ENCODE measurements at regions of chrX and their contacts with region 1.

Region 1: GRCh38 chrX:153927922-153928760 is 2.1 kb upstream of the ARHGAP4 start:
- DNase-seq: peak; percentile 90
- H3K4me3 Mint-ChIP-seq: peak overlapping the region; percentile 86
- H3K27ac Mint-ChIP-seq: peak overlapping the region; percentile 99
- H3K4me1 Mint-ChIP-seq: peaks cover 20% of the 10 kb centered on the region
- H3K27me3 Mint-ChIP-seq: no peaks in the 10 kb centered on the region

Region 2: GRCh38 chrX:153763989-153764755 is 164.0 kb before region 1 on chrX and contains the start of gene PLXNB3:
- intact Hi-C with region 1: loop called (anchors 10 kb)
- DNase-seq: peak; percentile 49
- H3K4me3 Mint-ChIP-seq: no peak within 1 kb of the TSS
- H3K27ac Mint-ChIP-seq: no peak within 1 kb of the TSS
- H3K4me1 Mint-ChIP-seq: peaks cover 4% of the 10 kb centered on the region
- H3K27me3 Mint-ChIP-seq: no peaks in the 10 kb centered on the region
- total RNA-seq, gene PLXNB3: 0.62 and 0.91 TPM in 2 replicates

Region 3: GRCh38 chrX:153947009-153947769 is 19.0 kb after region 1 on chrX:
- intact Hi-C with region 1: loop called (anchors 1 kb)
- DNase-seq: peak; percentile 71
- H3K4me3 Mint-ChIP-seq: no peak overlapping the region
- H3K27ac Mint-ChIP-seq: peak overlapping the region; percentile 82
- H3K4me1 Mint-ChIP-seq: peaks cover 14% of the 10 kb centered on the region
- H3K27me3 Mint-ChIP-seq: no peaks in the 10 kb centered on the region

Region 4: DNA sequence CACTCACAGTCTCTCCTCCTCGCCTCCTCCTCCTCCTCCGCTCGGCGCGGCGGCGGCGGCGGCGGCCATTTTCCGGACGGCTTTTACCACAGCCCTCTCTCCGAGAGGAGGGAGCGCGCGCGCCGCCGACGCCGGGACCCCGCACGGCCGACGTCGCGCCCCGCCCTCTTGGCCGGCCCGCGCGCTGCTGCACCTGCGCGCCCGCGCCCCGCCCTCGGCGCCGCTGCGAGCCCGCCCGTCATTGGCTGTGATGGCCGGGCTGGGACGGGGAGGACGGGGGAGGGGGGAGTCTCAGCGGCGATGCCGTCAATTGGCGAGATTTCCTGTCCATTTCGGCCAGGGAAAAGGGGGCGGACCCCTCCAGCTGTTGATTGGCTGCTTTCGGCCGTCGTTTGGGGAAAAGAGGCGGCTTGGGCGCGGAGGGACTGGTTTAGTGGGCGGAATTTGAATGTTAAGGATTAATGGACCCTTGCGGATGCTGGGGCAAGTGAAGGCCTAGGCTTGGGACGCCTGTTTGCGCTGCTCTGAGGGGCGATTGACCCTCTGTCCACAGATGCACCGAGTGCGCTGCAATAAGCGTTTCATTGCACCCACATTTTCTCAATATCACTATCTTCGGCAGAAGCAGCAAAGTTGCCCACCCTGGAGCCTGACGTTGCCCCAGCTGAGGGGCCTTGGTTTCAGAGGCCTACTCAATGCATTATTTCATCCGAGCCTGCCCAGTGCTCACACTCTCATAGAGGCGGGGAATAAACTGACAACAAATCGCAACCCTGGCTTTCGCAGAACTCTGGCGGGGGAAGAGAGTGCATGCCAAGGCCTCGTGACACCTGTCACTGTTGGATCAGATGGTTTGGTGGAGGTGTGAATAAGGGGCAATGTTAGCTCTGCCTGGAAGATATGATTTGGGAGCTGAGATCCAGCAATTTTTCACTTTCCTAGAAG is 169.7 kb after region 1 on chrX and contains the start of gene MECP2:
- intact Hi-C with region 1: loop called (anchors 5 kb)
- DNase-seq: peak; percentile 85
- H3K4me3 Mint-ChIP-seq: peak within 1 kb of the TSS; percentile 99
- H3K27ac Mint-ChIP-seq: peak within 1 kb of the TSS; percentile 100
- H3K4me1 Mint-ChIP-seq: peaks cover 55% of the 10 kb centered on the region
- H3K27me3 Mint-ChIP-seq: peaks cover 4% of the 10 kb centered on the region
- total RNA-seq, gene MECP2: 58.2 and 58.4 TPM in 2 replicates

Region 5: GRCh38 chrX:154478728-154479622 is 550.8 kb after region 1 on chrX and contains the start of gene LAGE3:
- intact Hi-C with region 1: loop called (anchors 1 kb)
- DNase-seq: peak; percentile 92
- H3K4me3 Mint-ChIP-seq: peak within 1 kb of the TSS; percentile 91
- H3K27ac Mint-ChIP-seq: peak within 1 kb of the TSS; percentile 94
- H3K4me1 Mint-ChIP-seq: peaks cover 14% of the 10 kb centered on the region
- H3K27me3 Mint-ChIP-seq: no peaks in the 10 kb centered on the region
- total RNA-seq, gene LAGE3: 49.4 and 51.7 TPM in 2 replicates

Measured in activated T-helper 2 cell treated with anti-CD3 and anti-CD28 coated beads, Interferon-gamma antibody, Interleukin-2, Interleukin-4, amounts not matched to agents 10 μg/mL and 5 μg/mL and 100 μg/mL, durations not matched to agents 14 hours and 24 hours and 36 hours (primary cell).